Adrenal gland (tissue), 19 donors: ENCODE measurements at regions of chr17 and their contacts with region 1.

Region 1: DNA sequence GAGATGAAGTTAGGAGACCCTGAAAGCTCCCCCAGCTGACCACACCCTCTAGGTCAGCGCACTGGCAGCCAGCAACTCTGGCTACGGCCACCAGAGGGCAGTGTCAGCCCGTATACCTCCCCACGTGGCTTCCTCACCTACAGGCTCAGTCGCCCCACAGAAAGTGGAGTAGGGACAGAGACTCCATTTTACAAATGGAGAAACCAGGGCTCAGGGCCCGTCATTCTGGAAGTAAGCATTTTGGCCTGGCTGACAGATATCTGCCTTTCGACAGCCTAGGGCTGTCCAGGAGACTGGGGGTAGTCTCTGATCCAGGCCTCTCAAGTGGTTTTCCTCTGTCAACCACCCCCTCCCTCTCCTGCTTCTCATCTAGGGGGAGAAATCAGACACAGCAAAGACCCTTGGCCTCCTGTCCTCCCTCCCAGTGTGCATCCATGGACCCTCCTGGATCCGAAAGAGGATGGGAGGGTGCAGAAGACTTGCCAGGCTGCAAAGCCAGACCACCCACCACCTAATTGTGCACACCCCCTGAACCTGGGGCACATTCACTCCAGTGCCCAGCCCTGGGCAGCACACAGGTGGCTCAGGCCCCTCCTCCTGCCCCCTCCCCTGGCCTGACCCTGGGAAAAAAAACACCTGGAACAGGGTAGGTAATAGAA is 3.8 kb upstream of the HAP1 start:
- DNase-seq: peak; percentile 71 to 90 (median 80)
- H3K4me3 ChIP-seq: no peak overlapping the region
- H3K27ac ChIP-seq: no peak overlapping the region
- H3K4me1 ChIP-seq: peaks cover 5 to 14% of the 10 kb centered on the region in 2 donors
- H3K27me3 ChIP-seq: peaks cover 31% of the 10 kb centered on the region
- CTCF ChIP-seq: peak; percentile 93 to 98 (median 98)
- POLR2A ChIP-seq: no peak

Region 2: GRCh38 chr17:41678907-41679739 is 59.1 kb before region 1 on chr17:
- intact Hi-C with region 1: no loop called
- DNase-seq: peak in 1 of 7 donors; percentile 50
- H3K4me3 ChIP-seq: peak overlapping the region in 1 of 4 donors; percentile 18
- H3K27ac ChIP-seq: peak overlapping the region; percentile 2 to 84 (median 59)
- H3K4me1 ChIP-seq: no peaks in the 10 kb centered on the region
- H3K27me3 ChIP-seq: no peaks in the 10 kb centered on the region
- CTCF ChIP-seq: no peak
- POLR2A ChIP-seq: no peak

Region 3: GRCh38 chr17:41801374-41802271 is 63.4 kb after region 1 on chr17:
- intact Hi-C with region 1: loop called (anchors 2 kb)
- DNase-seq: peak; percentile 63 to 91 (median 80)
- H3K4me3 ChIP-seq: no peak overlapping the region
- H3K27ac ChIP-seq: peak overlapping the region in 1 of 5 donors; percentile 40
- H3K4me1 ChIP-seq: peaks cover 0 to 9% of the 10 kb centered on the region in 2 donors
- H3K27me3 ChIP-seq: no peaks in the 10 kb centered on the region
- CTCF ChIP-seq: peak; percentile 88 to 98 (median 96)
- POLR2A ChIP-seq: no peak

Region 4: DNA sequence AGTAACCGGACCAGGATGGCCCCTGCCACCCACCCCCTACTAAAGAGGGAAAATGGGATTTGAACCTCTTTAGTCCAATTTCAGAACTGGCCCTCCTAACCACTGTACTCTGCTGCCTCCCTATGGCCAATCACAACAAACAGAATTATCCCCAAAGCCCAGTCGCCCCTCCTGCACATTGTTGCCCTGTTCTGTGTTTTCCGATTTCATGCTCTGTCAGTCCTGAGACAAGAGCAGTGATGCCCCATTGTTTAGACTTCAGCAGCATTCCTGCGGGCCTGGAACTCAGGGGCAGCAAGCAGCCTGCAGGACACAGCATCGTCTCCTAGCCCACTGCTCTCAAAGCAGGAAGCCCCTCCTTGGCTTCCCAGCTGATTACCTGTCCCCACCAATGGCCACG is 147.5 kb after region 1 on chr17:
- intact Hi-C with region 1: loop called in 1 of 2 experiments (anchors 10 kb)
- DNase-seq: no peak
- H3K4me3 ChIP-seq: no peak overlapping the region
- H3K27ac ChIP-seq: no peak overlapping the region
- H3K4me1 ChIP-seq: no peaks in the 10 kb centered on the region
- H3K27me3 ChIP-seq: no peaks in the 10 kb centered on the region
- CTCF ChIP-seq: peak in 2 of 6 experiments; percentile 22 to 33
- POLR2A ChIP-seq: no peak

Region 5: DNA sequence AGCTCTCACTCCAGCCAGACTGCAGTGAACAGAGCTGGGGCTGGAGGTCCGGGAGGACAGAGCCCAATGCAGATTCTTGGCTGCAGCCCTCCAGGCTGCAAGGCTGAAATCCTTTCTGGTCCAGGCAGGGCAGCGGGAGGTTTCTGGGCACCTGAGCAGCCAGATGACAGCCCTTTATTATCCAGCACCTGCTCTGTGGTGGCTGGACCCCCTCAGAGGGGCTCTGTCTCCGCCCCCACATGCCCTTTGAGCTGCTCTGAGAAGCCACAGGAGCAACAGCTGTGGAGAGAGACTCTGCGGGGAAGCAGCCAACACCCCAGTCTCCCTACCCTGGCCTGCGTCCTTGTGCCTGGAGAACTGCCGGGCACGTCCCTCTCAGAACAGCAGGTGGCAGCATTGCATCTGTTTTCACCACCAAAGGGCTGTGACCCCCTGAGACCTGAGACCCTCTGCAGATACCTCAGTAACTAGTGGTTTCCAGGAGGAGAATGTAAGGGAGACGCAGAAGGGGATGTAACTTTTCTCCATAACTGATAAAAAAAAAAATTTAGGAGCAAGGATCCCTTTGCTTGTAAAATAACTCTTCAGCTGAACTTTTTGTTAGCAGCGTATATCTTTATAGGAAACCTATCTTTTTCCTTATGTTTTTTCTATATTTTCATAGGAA is 224.7 kb after region 1 on chr17:
- intact Hi-C with region 1: loop called in 1 of 2 experiments (anchors 10 kb)
- DNase-seq: peak; percentile 63 to 89 (median 78)
- H3K4me3 ChIP-seq: no peak overlapping the region
- H3K27ac ChIP-seq: no peak overlapping the region
- H3K4me1 ChIP-seq: peaks cover 13 to 20% of the 10 kb centered on the region in 2 donors
- H3K27me3 ChIP-seq: no peaks in the 10 kb centered on the region
- CTCF ChIP-seq: peak; percentile 73 to 94 (median 87)
- POLR2A ChIP-seq: no peak